HEK293 (cell line): ENCODE measurements at regions of chr2 and their contacts with region 1.

Region 1: DNA sequence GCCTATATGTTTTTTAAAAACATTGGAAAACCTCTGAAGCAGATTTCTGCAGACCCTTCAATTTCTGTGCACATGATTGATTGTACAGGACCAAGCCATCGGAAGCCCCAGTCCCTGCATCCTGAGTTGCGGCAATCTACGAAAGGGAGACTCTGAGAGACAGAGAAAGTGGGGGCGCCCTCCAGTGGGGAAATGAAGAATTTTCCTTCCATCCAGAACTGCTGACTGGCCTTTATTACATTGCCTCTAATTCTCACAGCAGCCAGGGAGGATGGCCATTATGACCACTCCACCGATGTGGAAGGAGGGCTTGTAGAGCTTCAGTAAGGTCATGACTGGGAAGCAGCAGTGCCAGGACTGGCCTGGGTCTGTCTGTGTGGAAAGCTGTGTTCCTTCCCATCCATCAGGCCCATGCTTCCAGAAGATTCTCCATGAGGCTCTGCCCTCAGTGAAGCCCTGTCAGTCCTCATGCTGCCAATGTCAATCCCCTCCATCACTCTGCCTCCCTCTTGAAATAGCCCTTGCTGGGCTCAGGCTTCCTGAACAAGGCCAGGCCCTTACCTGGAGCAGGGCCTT is 20.0 kb upstream of the RESP18 start:
- H3K4me3 ChIP-seq: no peak overlapping the region
- H3K27ac ChIP-seq: no peak overlapping the region
- H3K4me1 ChIP-seq: no peaks in the 10 kb centered on the region
- CTCF ChIP-seq: peak; percentile 50; the same call in 1 of the 2 replicates

Region 2: DNA sequence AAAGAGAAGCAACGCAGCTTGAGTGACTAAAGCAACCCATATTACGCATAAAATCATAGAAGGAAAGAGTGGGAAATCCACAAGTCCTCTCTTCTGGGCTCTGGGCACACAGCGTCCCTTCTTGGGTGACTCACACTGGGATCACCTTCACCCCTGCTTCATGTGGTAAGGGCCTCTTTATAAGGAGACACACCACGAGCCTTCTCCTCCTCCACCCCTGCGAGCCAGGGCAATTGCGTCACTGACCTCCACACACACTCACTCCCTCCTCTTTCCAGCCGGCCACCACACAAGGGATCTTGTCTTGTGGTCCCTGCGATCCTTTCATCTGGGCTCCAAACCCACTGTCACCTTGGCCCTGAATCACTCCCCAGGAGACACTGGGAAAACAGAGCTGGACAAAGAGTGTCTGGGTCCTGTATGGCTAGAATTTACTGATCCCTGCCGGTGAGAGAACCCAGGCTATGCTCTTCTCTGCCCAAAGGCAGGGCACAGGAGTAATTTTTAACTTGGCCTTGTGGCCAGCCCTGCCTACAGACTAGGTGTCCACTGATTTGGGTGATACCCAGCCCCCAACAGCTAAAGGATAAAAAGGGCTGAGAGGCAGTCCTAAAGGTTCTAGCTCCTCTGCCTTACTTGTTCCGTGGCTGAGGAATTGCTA is 227.2 kb before region 1 on chr2:
- CTCF ChIA-PET with region 1: no interaction called
- POLR2A ChIA-PET with region 1: no interaction called
- H3K4me3 ChIP-seq: no peak overlapping the region
- H3K27ac ChIP-seq: peak overlapping the region; percentile 8; the same call in 1 of the 2 replicates
- H3K4me1 ChIP-seq: peaks cover 59% of the 10 kb centered on the region
- CTCF ChIP-seq: no peak

Region 3: DNA sequence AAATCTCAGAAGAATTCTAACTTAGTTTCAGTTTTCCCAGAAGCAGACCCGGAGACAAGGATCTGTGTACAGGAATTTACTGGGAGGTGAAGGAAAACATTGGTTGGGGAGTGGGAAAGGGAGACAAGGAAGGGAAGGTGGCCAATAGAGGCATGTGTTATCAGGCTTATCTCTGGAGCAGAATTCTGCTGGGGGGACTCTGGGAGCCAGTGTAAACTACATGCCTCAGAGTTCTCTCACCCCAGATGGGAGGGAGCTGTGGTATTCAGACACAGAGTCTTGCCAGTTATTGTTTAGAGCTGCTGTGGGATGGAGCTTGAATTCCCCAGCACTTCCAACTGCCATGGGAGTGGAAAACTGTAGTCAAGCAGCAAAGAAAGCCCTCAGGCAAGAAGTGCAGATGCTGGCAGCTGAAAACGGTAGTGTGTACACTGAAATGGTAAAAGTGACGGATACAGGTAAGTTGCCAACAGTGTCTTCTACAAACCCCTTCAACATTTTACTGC is 16.2 kb after region 1 on chr2:
- CTCF ChIA-PET with region 1: interaction called, 12 read pairs
- POLR2A ChIA-PET with region 1: interaction called, 3 read pairs
- H3K4me3 ChIP-seq: no peak overlapping the region
- H3K27ac ChIP-seq: no peak overlapping the region
- H3K4me1 ChIP-seq: peaks cover 9% of the 10 kb centered on the region
- CTCF ChIP-seq: no peak